PC-3 (cell line): ENCODE measurements at regions of chr12 and their contacts with region 1.

Region 1: DNA sequence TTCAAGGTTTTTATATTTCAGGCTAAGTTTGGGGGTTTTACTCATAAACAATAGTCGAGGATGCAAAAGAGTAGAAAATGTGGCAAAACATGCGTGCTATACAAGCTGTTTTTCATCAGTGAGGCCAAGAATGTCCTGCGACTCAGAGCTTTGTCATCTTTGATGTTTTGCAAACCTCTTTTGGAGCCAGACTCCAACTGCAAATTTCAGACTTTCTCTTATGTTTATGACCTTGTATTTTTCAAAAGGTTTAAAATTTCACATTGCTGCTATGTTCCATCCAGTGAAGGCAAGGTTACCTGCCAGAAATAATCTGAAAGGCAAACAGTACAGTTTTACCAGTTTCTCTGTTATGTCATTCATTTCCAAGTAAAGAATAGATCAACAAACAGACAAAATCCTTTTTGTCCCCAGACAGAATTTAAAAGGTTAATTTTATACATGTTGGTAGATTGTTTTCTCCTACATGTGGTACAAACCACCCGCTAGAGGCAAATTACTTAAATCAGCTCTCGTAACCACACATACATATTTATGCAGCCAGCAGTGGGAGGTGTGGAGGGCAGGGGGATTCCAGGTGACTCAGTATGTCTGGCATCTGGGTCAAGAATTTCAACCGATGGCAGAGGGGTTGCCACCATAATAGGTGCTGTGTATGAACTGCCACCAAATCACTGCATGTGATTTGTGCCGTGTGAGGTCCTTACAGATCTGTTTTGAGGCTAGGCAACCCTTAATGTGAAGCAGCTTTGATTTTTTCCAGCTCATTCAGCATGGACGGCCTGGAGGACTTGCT is 119.8 kb upstream of the CPM start:
- DNase-seq: peak; percentile 91
- ATAC-seq: peak; percentile 87
- H3K4me3 ChIP-seq: peak overlapping the region; percentile 39
- H3K27ac ChIP-seq: peak overlapping the region; percentile 84
- H3K4me1 ChIP-seq: peaks cover 23% of the 10 kb centered on the region
- H3K27me3 ChIP-seq: no peaks in the 10 kb centered on the region
- CTCF ChIP-seq: 0 out of 2 replicates have a peak, but pooled peaks have one; percentile 21

Region 2: DNA sequence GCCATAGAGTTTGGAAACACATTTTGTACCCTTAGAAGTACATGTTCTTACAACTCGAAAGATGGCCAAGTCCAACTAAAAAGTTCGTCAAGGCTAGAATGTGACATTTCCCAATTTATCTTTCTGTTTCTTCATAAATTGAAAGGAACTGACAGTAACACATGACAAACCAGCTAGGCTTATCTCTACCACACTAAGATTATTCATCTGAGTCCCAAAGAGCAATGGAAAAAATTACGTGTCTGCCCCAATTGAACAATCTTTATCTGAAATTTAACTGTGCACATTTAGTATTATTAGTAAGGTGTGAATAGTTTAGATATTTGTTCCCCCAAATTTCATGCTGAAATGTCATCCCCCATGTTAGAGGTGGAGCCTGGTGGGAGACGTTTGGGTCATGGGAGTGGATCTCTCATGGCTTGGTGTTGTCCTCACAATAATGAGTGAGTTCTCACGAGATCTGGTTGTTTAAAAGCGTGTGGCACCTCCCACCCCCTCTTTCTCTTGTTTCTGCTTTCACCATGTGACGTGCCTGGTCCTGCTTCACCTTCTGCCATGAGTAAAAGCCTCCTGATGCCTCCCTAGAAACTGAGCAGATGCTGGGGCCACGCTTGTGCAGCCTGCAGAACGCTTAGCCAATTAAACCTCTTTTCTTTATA is 133.1 kb before region 1 on chr12:
- CTCF ChIA-PET with region 1: no interaction called
- POLR2A ChIA-PET with region 1: no interaction called
- intact Hi-C with region 1: loop called (anchors 5 kb)
- DNase-seq: no peak
- ATAC-seq: no peak
- H3K4me3 ChIP-seq: no peak overlapping the region
- H3K27ac ChIP-seq: no peak overlapping the region
- H3K4me1 ChIP-seq: peaks cover 12% of the 10 kb centered on the region
- H3K27me3 ChIP-seq: no peaks in the 10 kb centered on the region
- CTCF ChIP-seq: no peak

Region 3: GRCh38 chr12:69024413-69024812 is 28.4 kb before region 1 on chr12:
- CTCF ChIA-PET with region 1: no interaction called
- POLR2A ChIA-PET with region 1: no interaction called
- intact Hi-C with region 1: loop called (anchors 2 kb)
- DNase-seq: peak; percentile 86
- ATAC-seq: peak; percentile 95
- H3K4me3 ChIP-seq: peak overlapping the region; percentile 62
- H3K27ac ChIP-seq: peak overlapping the region; percentile 85
- H3K4me1 ChIP-seq: peaks cover 35% of the 10 kb centered on the region
- H3K27me3 ChIP-seq: no peaks in the 10 kb centered on the region
- CTCF ChIP-seq: no peak